Heart right ventricle (tissue), 16 donors: ENCODE measurements at regions of chr11 and their contacts with region 1.

Region 1: GRCh38 chr11:65654375-65655349 is 8.1 kb downstream of the RELA start:
- DNase-seq: peak in 1 of 2 donors; percentile 6
- ATAC-seq: no peak
- H3K4me3 ChIP-seq: no peak overlapping the region
- H3K27ac ChIP-seq: peak overlapping the region in 8 of 10 donors; percentile 91 to 99 (median 96)
- H3K4me1 ChIP-seq: peaks cover 23 to 57% (median 42%) of the 10 kb centered on the region in 9 donors
- H3K27me3 ChIP-seq: no peaks in the 10 kb centered on the region
- CTCF ChIP-seq: no peak

Region 2: DNA sequence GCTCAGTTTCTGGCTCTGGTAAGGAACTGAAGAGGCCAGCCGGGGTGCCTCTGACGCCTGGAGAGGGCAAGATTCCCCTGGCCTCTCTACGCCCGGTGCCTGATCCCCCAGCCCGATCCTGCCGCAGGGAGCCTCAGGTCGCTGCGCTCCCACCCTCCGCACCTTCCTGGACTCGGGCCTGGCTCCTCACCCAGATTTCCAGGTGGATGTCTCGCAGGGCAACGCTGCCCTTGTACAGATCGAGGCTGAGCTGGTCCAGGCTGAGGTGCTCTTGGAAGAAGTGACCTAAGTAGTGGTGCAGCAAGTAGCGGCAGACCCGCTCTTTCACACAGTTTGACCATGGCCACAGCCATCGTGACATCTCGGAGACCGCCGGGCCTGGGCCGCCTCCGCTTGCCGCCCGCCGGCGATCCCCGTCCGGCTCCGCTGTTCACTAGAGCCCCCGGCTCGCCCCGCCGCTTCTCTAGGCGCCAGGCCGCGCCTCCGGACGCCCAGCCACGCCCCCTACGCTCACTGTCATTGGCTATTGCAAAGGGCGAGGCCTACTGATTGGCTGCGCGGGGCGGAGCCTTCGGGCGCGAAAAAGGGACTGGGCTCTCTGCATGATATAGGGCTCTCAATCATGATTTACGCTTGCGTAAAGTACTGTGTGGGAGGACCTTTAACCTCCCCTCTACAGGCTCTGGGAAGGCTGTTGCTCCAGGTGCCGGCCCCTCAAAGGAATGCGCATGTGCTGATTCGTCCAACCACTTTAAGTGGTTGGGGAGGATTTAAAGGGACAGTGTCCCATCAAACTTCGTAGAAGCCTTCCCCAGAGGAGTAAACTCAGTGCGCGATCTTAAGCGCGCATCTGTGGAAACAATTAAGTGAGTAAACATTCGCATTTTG is 737.6 kb before region 1 on chr11 and contains the start of gene ATG2A:
- intact Hi-C with region 1: no loop called
- DNase-seq: peak; percentile 99
- ATAC-seq: peak; percentile 97 to 100 (median 98)
- H3K4me3 ChIP-seq: peak within 1 kb of the TSS; percentile 63 to 98 (median 86)
- H3K27ac ChIP-seq: peak within 1 kb of the TSS; percentile 27 to 96 (median 84)
- H3K4me1 ChIP-seq: peaks cover 5 to 43% (median 34%) of the 10 kb centered on the region in 9 donors
- H3K27me3 ChIP-seq: no peaks in the 10 kb centered on the region
- CTCF ChIP-seq: peak in 1 of 9 donors; percentile 11
- total RNA-seq, gene ATG2A: 12.4 to 17.7 (median 16.0) TPM

Region 3: DNA sequence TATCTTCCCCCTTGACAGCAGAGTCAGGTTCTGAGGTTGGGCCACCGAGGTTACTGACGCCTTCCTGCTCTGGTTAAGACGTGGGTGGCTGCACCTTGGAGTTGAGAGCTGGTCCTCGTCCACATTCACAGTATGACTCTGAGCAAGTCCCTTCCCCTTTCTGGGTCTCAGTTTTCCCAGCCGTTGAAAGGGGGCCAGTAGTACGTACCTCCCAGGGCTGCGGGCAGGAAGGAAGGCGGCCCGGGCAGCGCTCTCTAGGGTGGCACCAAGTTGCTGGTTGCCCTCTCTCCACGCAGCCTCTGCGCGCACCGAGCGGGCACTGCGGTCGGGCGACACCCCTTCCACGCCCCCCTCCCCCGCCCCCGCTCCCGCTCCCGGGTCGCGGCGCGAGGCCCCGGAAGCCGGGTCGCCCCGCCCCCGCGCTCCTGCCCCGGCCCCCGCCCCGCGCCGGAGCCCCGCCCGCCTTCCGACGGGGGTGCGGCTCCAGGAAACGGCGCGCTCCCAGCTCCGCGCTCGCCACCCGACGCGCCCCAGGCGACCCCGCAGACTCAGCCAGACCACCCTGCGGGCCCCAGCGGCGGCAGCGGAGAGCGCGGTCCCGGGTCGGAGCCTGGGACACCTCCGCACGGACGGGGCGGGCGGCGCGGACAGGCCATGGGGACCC is 79.0 kb before region 1 on chr11 and contains the start of gene EHBP1L1:
- intact Hi-C with region 1: loop called in 1 of 10 experiments (anchors 5 kb)
- DNase-seq: peak; percentile 73 to 83
- ATAC-seq: peak in 7 of 8 donors; percentile 0 to 35 (median 11)
- H3K4me3 ChIP-seq: peak within 1 kb of the TSS; percentile 75 to 98 (median 84)
- H3K27ac ChIP-seq: peak within 1 kb of the TSS; percentile 89 to 100 (median 96)
- H3K4me1 ChIP-seq: peaks cover 37 to 70% (median 61%) of the 10 kb centered on the region in 9 donors
- H3K27me3 ChIP-seq: no peaks in the 10 kb centered on the region
- CTCF ChIP-seq: no peak
- total RNA-seq, gene EHBP1L1: 42.9 to 113 (median 53.9) TPM

Region 4: DNA sequence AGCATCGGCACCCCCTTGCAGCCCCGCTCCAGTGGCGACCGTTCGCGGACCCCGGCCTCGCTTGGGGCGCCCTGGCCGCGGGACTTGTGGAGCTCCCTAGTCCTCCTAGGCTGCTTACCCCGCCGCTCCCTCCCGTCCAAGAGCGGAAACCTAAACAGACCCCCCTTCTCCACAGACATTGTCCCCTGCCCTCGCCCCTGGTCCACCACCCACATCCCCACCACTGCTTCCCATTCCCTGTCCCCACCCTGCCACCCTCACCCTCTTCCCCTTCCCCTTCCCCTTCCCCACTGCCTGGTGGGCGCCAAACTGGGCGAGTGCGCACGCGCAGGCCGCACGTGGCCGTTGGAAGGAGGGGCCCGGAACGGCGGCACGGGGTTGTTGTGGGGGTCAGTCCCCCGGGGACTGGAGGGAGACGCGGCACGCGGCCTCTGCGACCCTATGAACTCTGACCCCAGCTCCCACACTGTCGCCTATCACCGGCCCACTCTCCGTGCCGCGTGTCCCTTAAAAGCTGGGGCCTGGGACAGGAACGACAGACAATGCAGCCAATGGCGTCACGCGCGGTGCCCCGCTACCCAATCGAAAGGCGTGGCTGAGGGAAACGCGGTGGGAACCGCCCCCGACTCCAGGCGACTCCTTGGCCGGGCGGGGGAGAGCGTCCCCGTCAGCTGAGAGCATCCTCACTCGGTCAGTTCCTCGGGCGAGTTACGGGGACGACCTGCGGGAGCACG is 178.8 kb after region 1 on chr11 and contains the start of gene SNX32:
- intact Hi-C with region 1: no loop called
- DNase-seq: peak; percentile 95 to 96
- ATAC-seq: peak; percentile 99 to 100 (median 100)
- H3K4me3 ChIP-seq: peak within 1 kb of the TSS; percentile 40 to 70 (median 58)
- H3K27ac ChIP-seq: peak within 1 kb of the TSS in 3 of 10 donors; percentile 26 to 75 (median 52)
- H3K4me1 ChIP-seq: peaks cover 0 to 18% (median 6%) of the 10 kb centered on the region in 9 donors
- H3K27me3 ChIP-seq: peaks cover 0 to 10% (median 0%) of the 10 kb centered on the region in 7 donors
- CTCF ChIP-seq: no peak
- total RNA-seq, gene SNX32: 0.13 to 0.32 (median 0.21) TPM in 5 of 10 donors, not detected in the others